ENCODE measurements at regions of chr20 and their contacts with region 1.

Region 1: GRCh38 chr20:31661625-31662371 is 24.1 kb downstream of the COX4I2 start:
- DNase-seq: peak; percentile 95
- H3K4me3 ChIP-seq: peak overlapping the region; percentile 13 to 67 (median 36)
- H3K27ac ChIP-seq: peak overlapping the region; percentile 30 to 83 (median 76)
- H3K4me1 ChIP-seq: peaks cover 16 to 56% (median 48%) of the 10 kb centered on the region in 6 donors
- H3K27me3 ChIP-seq: no peaks in the 10 kb centered on the region
- CTCF ChIP-seq: peak; percentile 72 to 96 (median 88)
- POLR2A ChIP-seq: no peak

Region 2: DNA sequence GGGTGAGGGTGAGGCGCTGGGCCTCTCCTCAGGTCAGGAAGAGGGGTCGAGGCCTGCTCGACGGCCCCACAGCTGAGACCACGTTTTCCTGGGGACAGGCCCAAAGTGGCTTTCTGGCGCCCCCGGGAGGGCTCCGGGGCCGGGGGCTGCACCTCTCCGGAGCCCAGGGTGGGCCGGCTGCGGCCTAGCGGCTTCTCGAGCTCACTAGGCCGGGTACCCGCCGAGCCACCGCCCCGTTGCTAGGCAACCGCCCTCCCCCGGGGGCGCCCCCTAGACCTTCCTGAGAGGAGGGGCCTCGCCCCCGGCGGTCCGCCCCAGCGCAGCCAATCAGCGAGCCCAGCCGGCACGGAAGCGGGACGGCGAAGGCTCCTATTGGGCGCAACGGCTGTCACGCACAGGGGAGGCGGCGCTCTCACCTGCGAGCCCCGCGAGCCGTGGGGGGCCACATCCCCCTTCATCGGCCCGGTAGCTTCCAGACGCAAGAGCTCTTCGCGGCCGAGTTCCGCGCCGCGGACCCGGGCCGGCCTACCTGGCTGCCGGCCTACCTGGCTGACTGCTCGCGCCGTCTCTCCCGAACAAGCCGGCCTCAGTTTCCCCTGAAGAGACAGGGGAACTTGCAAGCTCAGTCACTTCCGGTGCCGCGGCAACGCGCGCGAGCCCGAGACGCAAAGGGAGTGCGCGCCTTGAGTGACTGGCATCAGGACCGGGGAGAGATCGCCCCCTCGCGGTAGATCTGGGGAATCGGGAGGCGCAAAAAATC is 61.7 kb after region 1 on chr20:
- intact Hi-C with region 1: loop called (anchors 2 kb)
- DNase-seq: peak; percentile 100
- H3K4me3 ChIP-seq: peak overlapping the region; percentile 65 to 98 (median 89)
- H3K27ac ChIP-seq: peak overlapping the region; percentile 90 to 98 (median 97)
- H3K4me1 ChIP-seq: peaks cover 20 to 51% (median 42%) of the 10 kb centered on the region in 6 donors
- H3K27me3 ChIP-seq: no peaks in the 10 kb centered on the region
- CTCF ChIP-seq: peak; percentile 81 to 100 (median 95)
- POLR2A ChIP-seq: peak in 2 of 3 donors; percentile 33 to 39

Region 3: GRCh38 chr20:31890646-31891045 is 228.8 kb after region 1 on chr20:
- intact Hi-C with region 1: no loop called
- DNase-seq: no peak
- H3K4me3 ChIP-seq: no peak overlapping the region
- H3K27ac ChIP-seq: no peak overlapping the region
- H3K4me1 ChIP-seq: peaks cover 0 to 12% (median 9%) of the 10 kb centered on the region in 6 donors
- H3K27me3 ChIP-seq: peaks cover 0 to 8% (median 0%) of the 10 kb centered on the region in 7 donors
- CTCF ChIP-seq: no peak
- POLR2A ChIP-seq: no peak

Region 4: DNA sequence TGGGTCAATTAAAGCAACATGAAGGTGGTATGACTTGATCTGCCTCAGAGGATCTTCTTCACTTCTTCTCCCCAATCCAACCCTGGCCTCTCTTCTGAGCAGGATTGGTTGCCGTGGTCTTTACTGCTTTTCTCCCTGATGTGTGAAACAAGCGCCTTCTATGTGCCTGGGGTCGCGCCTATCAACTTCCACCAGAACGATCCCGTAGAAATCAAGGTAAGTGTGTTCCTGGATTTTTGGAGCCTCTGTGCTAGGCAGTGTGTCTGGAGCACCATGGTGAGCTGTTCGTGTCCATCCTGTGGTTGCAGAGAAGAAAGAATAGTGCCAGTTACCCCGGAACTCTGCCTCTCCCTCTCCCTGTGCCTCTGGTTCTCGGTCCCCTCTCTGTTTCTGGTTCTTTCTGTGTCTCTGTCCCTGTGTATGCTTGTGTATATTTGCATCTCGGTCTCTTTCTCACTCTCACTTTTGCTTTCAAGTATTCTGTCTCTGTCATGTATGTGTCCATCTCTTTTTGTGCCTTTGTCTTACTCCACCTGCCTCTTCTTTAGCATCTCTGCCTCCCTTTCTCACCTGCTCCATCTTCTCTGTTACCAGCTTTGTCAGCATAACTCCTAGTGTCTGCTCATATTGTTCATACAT is 471.2 kb after region 1 on chr20:
- intact Hi-C with region 1: no loop called
- DNase-seq: no peak
- H3K4me3 ChIP-seq: no peak overlapping the region
- H3K27ac ChIP-seq: no peak overlapping the region
- H3K4me1 ChIP-seq: no peaks in the 10 kb centered on the region
- H3K27me3 ChIP-seq: no peaks in the 10 kb centered on the region
- CTCF ChIP-seq: no peak
- POLR2A ChIP-seq: no peak